Naive thymus-derived CD4-positive, alpha-beta T cell (primary cell): ENCODE measurements at regions of chr3 and their contacts with region 1.

Region 1: GRCh38 chr3:156474560-156475389 is 80.1 kb downstream of the SSR3 start:
- DNase-seq: peak in 2 of 9 donors; percentile 3 to 12
- ATAC-seq: no peak
- H3K4me3 ChIP-seq: no peak overlapping the region
- H3K4me3 Mint-ChIP-seq: peak overlapping the region in 3 of 10 donors; percentile 5 to 33 (median 21)
- H3K27ac ChIP-seq: no peak overlapping the region
- H3K27ac Mint-ChIP-seq: peak overlapping the region in 2 of 9 donors; percentile 5 to 22
- H3K4me1 ChIP-seq: no peaks in the 10 kb centered on the region
- H3K4me1 Mint-ChIP-seq: peaks cover 0 to 5% (median 0%) of the 10 kb centered on the region in 7 donors
- H3K27me3 ChIP-seq: no peaks in the 10 kb centered on the region
- H3K27me3 Mint-ChIP-seq: peaks cover 0 to 71% (median 9%) of the 10 kb centered on the region in 5 donors

Region 2: DNA sequence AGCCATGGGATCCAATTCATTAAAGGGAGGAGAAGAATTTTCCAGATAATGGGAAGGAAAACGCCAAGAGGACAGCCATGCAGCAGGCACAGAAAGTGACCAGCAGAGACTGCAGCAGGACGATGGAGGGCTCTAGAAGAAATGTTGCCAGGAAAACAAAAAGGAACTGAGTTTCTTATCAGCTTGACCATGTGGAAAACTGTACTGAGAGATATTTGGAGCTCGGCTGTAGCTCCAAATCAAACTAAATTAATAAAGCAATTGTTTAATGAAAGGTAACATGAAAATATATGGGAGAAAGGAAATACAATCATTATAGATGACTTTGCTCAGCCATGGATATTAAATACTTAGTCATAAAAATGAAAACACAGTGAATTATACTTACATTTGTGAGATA is 16.4 kb after region 1 on chr3:
- CTCF ChIA-PET with region 1: no interaction called
- POLR2A ChIA-PET with region 1: interaction called, 4 read pairs
- intact Hi-C with region 1: loop called in 1 of 2 experiments (anchors 2 kb)
- DNase-seq: no peak
- ATAC-seq: no peak
- H3K4me3 ChIP-seq: no peak overlapping the region
- H3K4me3 Mint-ChIP-seq: no peak overlapping the region
- H3K27ac ChIP-seq: no peak overlapping the region
- H3K27ac Mint-ChIP-seq: no peak overlapping the region
- H3K4me1 ChIP-seq: no peaks in the 10 kb centered on the region
- H3K4me1 Mint-ChIP-seq: peaks cover 0 to 2% (median 0%) of the 10 kb centered on the region in 7 donors
- H3K27me3 ChIP-seq: no peaks in the 10 kb centered on the region
- H3K27me3 Mint-ChIP-seq: peaks cover 0 to 30% (median 4%) of the 10 kb centered on the region in 5 donors

Region 3: GRCh38 chr3:156723182-156723619 is 248.4 kb after region 1 on chr3:
- CTCF ChIA-PET with region 1: no interaction called
- POLR2A ChIA-PET with region 1: no interaction called
- intact Hi-C with region 1: no loop called
- DNase-seq: no peak
- ATAC-seq: no peak
- H3K4me3 ChIP-seq: no peak overlapping the region
- H3K4me3 Mint-ChIP-seq: no peak overlapping the region
- H3K27ac ChIP-seq: no peak overlapping the region
- H3K27ac Mint-ChIP-seq: no peak overlapping the region
- H3K4me1 ChIP-seq: no peaks in the 10 kb centered on the region
- H3K4me1 Mint-ChIP-seq: peaks cover 0 to 27% (median 0%) of the 10 kb centered on the region in 7 donors
- H3K27me3 ChIP-seq: no peaks in the 10 kb centered on the region
- H3K27me3 Mint-ChIP-seq: no peaks in the 10 kb centered on the region